Gastrocnemius medialis (tissue), 4 donors: ENCODE measurements at regions of chr9 and their contacts with region 1.

Region 1: GRCh38 chr9:6106576-6107339 is 91.3 kb upstream of the RANBP6 start:
- DNase-seq: peak; percentile 7 to 45
- ATAC-seq: peak; percentile 92 to 99
- H3K4me3 ChIP-seq: peak overlapping the region; percentile 6 to 42 (median 28)
- H3K27ac ChIP-seq: peak overlapping the region; percentile 69 to 83 (median 76)
- H3K4me1 ChIP-seq: peaks cover 0 to 13% of the 10 kb centered on the region in 2 donors
- H3K27me3 ChIP-seq: no peaks in the 10 kb centered on the region
- CTCF ChIP-seq: peak in 4 of 5 experiments; percentile 35 to 61 (median 50)
- POLR2A ChIP-seq: no peak

Region 2: GRCh38 chr9:5799314-5799713 is 307.4 kb before region 1 on chr9:
- in situ Hi-C with region 1: no loop called
- intact Hi-C with region 1: no loop called
- DNase-seq: no peak
- ATAC-seq: peak in 1 of 2 donors; percentile 35
- H3K4me3 ChIP-seq: no peak overlapping the region
- H3K27ac ChIP-seq: no peak overlapping the region
- H3K4me1 ChIP-seq: peaks cover 5 to 12% of the 10 kb centered on the region in 2 donors
- H3K27me3 ChIP-seq: no peaks in the 10 kb centered on the region
- CTCF ChIP-seq: no peak
- POLR2A ChIP-seq: no peak

Region 3: DNA sequence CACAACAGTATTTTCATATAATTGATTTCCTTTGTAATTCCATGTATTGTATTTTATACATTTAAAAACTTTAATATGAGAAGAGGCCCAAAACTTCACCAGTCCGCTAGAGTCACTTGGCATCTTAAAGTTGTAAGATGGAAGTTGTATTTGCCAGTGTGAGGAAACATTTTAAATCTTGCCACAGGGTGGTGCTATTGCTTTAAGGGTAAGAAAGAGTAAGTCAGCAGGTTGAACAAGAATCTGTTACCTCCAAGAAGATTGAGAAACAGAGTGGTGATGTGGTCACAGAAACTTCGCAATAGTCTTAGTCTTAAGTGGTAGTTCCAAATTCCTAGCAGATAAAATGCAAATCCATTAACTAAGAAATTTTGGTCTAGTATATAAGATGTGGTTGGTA is 51.5 kb before region 1 on chr9:
- in situ Hi-C with region 1: no loop called
- intact Hi-C with region 1: loop called (anchors 2 kb)
- DNase-seq: no peak
- ATAC-seq: peak; percentile 90 to 98
- H3K4me3 ChIP-seq: no peak overlapping the region
- H3K27ac ChIP-seq: no peak overlapping the region
- H3K4me1 ChIP-seq: no peaks in the 10 kb centered on the region
- H3K27me3 ChIP-seq: no peaks in the 10 kb centered on the region
- CTCF ChIP-seq: peak; percentile 50 to 71 (median 61)
- POLR2A ChIP-seq: no peak

Region 4: GRCh38 chr9:6080154-6080716 is 26.5 kb before region 1 on chr9:
- in situ Hi-C with region 1: no loop called
- intact Hi-C with region 1: loop called (anchors 2 kb)
- DNase-seq: peak; percentile 62 to 85
- ATAC-seq: peak; percentile 90 to 95
- H3K4me3 ChIP-seq: peak overlapping the region; percentile 49 to 61 (median 54)
- H3K27ac ChIP-seq: peak overlapping the region; percentile 69 to 74 (median 71)
- H3K4me1 ChIP-seq: peaks cover 0 to 6% of the 10 kb centered on the region in 2 donors
- H3K27me3 ChIP-seq: no peaks in the 10 kb centered on the region
- CTCF ChIP-seq: peak in 2 of 5 experiments; percentile 9 to 17
- POLR2A ChIP-seq: no peak

Region 5: GRCh38 chr9:6090317-6090716 is 16.4 kb before region 1 on chr9:
- in situ Hi-C with region 1: no loop called
- intact Hi-C with region 1: loop called (anchors 2 kb)
- DNase-seq: peak; percentile 6 to 54
- ATAC-seq: peak; percentile 99 to 100
- H3K4me3 ChIP-seq: no peak overlapping the region
- H3K27ac ChIP-seq: peak overlapping the region; percentile 5 to 75 (median 52)
- H3K4me1 ChIP-seq: peaks cover 10 to 15% of the 10 kb centered on the region in 2 donors
- H3K27me3 ChIP-seq: no peaks in the 10 kb centered on the region
- CTCF ChIP-seq: no peak
- POLR2A ChIP-seq: no peak